Aorta (tissue), 5 donors: ENCODE measurements at regions of chr5 and their contacts with region 1.

Region 1: GRCh38 chr5:172454358-172455086 is at the start of gene SH3PXD2B:
- DNase-seq: peak; percentile 75 to 88
- ATAC-seq: peak; percentile 31
- H3K4me3 ChIP-seq: peak within 1 kb of the TSS; percentile 90 to 92
- H3K27ac ChIP-seq: peak within 1 kb of the TSS in 1 of 2 donors; percentile 89
- H3K4me1 ChIP-seq: no peaks in the 10 kb centered on the region
- H3K27me3 ChIP-seq: no peaks in the 10 kb centered on the region
- total RNA-seq, gene SH3PXD2B: 43.3 to 69.1 TPM

Region 2: DNA sequence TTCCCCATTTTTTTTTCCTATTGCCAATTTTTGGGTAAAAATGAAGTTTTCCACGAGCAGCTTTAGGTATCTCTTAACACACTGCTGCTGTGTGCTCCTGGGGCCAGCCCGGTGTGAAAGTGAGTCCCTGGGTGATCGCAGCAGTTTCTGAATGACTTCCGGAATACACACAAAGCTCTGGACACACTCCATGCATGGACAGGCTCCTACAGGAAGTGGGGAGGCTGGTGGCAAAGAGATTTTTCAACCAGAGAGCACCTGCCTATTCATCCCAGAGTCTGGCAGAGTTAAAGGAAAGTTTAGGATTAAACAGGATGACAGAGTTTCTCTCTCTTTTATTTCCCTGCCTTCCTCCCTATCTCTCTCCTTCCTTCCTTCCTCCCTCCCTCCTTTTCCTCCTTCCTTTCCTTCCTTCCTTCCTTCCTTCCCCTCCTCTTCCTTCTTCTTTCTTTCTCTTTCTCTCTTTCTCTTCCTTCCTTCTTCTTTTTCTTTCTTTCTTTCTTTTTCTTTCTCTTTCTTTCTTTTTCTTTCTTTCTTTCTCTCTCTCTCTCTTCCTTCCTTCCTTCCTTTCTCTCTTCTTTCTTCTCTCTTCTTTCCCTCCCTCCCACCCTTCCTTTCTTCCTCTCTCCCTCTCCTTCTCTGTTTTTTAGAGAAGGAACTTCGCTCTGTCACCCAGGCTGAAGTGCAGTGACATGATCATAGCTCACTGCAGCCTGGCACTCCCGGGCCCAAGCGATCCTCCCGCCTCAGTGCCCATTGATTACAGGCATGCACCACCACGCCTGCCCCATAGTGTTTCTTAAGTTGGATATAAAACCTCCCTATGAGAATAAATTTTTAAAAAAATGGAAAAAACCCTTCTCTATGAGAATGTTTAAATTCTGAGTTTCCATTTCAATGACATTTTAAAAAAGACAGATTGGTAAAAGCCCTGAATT is 132.2 kb before region 1 on chr5:
- intact Hi-C with region 1: no loop called
- DNase-seq: no peak
- ATAC-seq: no peak
- H3K4me3 ChIP-seq: no peak overlapping the region
- H3K27ac ChIP-seq: no peak overlapping the region
- H3K4me1 ChIP-seq: no peaks in the 10 kb centered on the region
- H3K27me3 ChIP-seq: no peaks in the 10 kb centered on the region

Region 3: GRCh38 chr5:172417983-172418630 is 36.4 kb before region 1 on chr5:
- intact Hi-C with region 1: loop called (anchors 5 kb)
- DNase-seq: peak; percentile 94 to 96
- ATAC-seq: peak; percentile 93
- H3K4me3 ChIP-seq: no peak overlapping the region
- H3K27ac ChIP-seq: peak overlapping the region in 1 of 2 donors; percentile 76
- H3K4me1 ChIP-seq: peaks cover 0 to 3% of the 10 kb centered on the region in 2 donors
- H3K27me3 ChIP-seq: no peaks in the 10 kb centered on the region

Region 4: DNA sequence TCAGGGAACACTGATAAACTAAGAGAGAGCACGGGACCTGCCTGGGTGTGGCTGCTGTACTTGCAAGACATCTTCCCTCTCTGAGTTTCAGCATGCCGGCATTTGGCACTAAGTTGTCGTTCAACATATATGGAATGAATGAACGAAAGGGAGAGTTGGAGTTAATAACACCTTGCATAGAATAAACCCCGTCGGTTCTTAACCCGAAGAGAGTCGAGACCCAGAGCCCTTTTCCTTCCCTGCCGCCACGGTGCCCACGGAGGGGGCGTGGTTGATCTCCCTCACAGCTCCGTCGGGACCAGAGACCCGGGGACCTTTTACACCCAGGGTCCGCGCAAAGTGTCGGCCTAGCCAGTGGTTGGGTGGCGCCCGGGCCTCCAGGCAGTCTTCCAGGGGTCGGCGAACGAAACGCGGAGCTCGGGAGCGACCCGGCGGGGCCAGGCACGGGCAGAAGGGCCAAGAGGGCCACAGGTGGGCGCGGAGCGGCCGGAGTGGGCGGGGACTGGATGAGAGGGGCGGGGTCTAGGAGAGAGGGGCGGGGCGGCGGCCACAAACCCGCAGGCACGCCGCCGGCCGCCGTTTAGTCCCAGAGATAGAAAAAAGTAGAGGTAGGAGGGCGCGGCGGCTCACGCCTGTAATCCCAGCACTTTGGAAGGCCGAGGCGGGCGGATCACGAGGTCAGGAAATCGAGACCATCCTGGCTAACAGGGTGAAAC is 504.0 kb after region 1 on chr5:
- intact Hi-C with region 1: loop called in 1 of 2 experiments (anchors 10 kb)
- DNase-seq: peak; percentile 80 to 90
- ATAC-seq: peak; percentile 86
- H3K4me3 ChIP-seq: no peak overlapping the region
- H3K27ac ChIP-seq: peak overlapping the region; percentile 29 to 61
- H3K4me1 ChIP-seq: no peaks in the 10 kb centered on the region
- H3K27me3 ChIP-seq: no peaks in the 10 kb centered on the region